ENCODE measurements at regions of chr6 and their contacts with region 1.

Region 1: GRCh38 chr6:118709859-118710350 is 58.5 kb upstream of the CEP85L start:
- DNase-seq: peak; percentile 86
- ATAC-seq: peak; percentile 93
- H3K4me3 ChIP-seq: peak overlapping the region; percentile 59 to 93 (median 83)
- H3K4me3 Mint-ChIP-seq: peak overlapping the region; percentile 97
- H3K27ac ChIP-seq: peak overlapping the region; percentile 62 to 86
- H3K27ac Mint-ChIP-seq: peak overlapping the region; percentile 95
- H3K4me1 ChIP-seq: peaks cover 54 to 58% of the 10 kb centered on the region in 2 donors
- H3K4me1 Mint-ChIP-seq: peaks cover 68% of the 10 kb centered on the region
- H3K27me3 ChIP-seq: no peaks in the 10 kb centered on the region
- H3K27me3 Mint-ChIP-seq: no peaks in the 10 kb centered on the region
- CTCF ChIP-seq: no peak

Region 2: GRCh38 chr6:118697554-118697953 is 12.4 kb before region 1 on chr6:
- CTCF ChIA-PET with region 1: interaction called, 16 read pairs
- POLR2A ChIA-PET with region 1: interaction called, 7 read pairs
- intact Hi-C with region 1: no loop called
- DNase-seq: no peak
- ATAC-seq: peak; percentile 45
- H3K4me3 ChIP-seq: no peak overlapping the region
- H3K4me3 Mint-ChIP-seq: no peak overlapping the region
- H3K27ac ChIP-seq: no peak overlapping the region
- H3K27ac Mint-ChIP-seq: no peak overlapping the region
- H3K4me1 ChIP-seq: peaks cover 4 to 7% of the 10 kb centered on the region in 2 donors
- H3K4me1 Mint-ChIP-seq: peaks cover 57% of the 10 kb centered on the region
- H3K27me3 ChIP-seq: no peaks in the 10 kb centered on the region
- H3K27me3 Mint-ChIP-seq: no peaks in the 10 kb centered on the region
- CTCF ChIP-seq: peak; percentile 23

Region 3: GRCh38 chr6:118724211-118724610 is 14.3 kb after region 1 on chr6:
- CTCF ChIA-PET with region 1: interaction called, 6 read pairs
- POLR2A ChIA-PET with region 1: interaction called, 17 read pairs
- intact Hi-C with region 1: loop called (anchors 1 kb)
- DNase-seq: peak; percentile 52
- ATAC-seq: peak; percentile 70
- H3K4me3 ChIP-seq: peak overlapping the region in 2 of 5 experiments; percentile 32 to 62
- H3K4me3 Mint-ChIP-seq: peak overlapping the region; percentile 53
- H3K27ac ChIP-seq: peak overlapping the region in 1 of 2 donors; percentile 61
- H3K27ac Mint-ChIP-seq: peak overlapping the region; percentile 13
- H3K4me1 ChIP-seq: peaks cover 42 to 43% of the 10 kb centered on the region in 2 donors
- H3K4me1 Mint-ChIP-seq: peaks cover 57% of the 10 kb centered on the region
- H3K27me3 ChIP-seq: no peaks in the 10 kb centered on the region
- H3K27me3 Mint-ChIP-seq: no peaks in the 10 kb centered on the region
- CTCF ChIP-seq: no peak

Region 4: DNA sequence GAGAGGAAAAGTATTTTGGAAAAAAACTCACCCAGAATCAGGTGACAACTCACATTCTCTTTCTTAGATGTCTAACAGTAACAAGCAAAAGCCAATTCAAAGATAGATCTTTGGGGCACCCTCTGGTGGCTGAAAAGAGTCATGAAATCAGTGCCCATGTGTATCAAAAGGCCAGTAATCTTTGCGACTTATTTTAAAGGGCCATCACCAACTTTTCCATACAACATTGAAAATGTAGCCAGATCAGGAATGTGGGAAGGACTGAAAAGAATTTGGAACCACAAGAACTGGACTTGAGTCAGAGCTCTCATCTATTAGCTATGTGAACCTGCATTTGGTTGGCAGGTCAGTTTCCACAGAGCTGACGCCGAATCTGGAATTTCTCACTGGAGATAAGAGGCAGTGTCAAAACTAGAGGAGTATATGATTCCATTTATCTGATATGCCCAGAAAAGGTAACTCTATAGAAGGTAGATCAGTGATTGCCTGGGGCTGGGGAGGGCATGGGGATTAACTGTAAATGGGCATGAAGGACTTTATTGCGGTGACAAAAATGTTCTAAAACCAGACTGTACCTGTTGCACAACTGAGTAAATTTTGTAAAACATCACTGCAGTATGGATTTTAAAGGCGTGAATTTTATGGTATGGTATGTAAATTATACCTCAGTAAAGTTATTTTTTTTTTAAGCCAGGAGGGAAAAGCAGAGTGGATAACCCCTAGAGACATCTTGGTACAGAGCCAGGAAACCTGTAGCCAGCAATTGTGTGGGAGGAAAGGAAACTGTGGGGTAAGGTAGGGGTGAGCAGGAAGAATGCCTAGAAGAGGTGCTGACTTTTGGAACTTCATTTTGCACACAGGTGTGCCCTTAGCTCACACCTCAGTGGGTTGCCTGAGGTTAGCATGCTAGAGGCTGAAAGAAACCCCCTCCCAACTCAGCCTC is 67.0 kb after region 1 on chr6:
- CTCF ChIA-PET with region 1: interaction called, 16 read pairs
- POLR2A ChIA-PET with region 1: no interaction called
- intact Hi-C with region 1: no loop called
- DNase-seq: peak; percentile 75
- ATAC-seq: peak; percentile 68
- H3K4me3 ChIP-seq: no peak overlapping the region
- H3K4me3 Mint-ChIP-seq: no peak overlapping the region
- H3K27ac ChIP-seq: no peak overlapping the region
- H3K27ac Mint-ChIP-seq: no peak overlapping the region
- H3K4me1 ChIP-seq: no peaks in the 10 kb centered on the region
- H3K4me1 Mint-ChIP-seq: peaks cover 6% of the 10 kb centered on the region
- H3K27me3 ChIP-seq: no peaks in the 10 kb centered on the region
- H3K27me3 Mint-ChIP-seq: peaks cover 4% of the 10 kb centered on the region
- CTCF ChIP-seq: peak; percentile 89

Region 5: GRCh38 chr6:118934461-118935330 is 224.8 kb after region 1 on chr6 and contains the start of gene MCM9:
- CTCF ChIA-PET with region 1: no interaction called
- POLR2A ChIA-PET with region 1: interaction called, 7 read pairs
- intact Hi-C with region 1: loop called (anchors 2 kb)
- DNase-seq: peak; percentile 93
- ATAC-seq: peak; percentile 89
- H3K4me3 ChIP-seq: peak within 1 kb of the TSS; percentile 91 to 99 (median 94)
- H3K4me3 Mint-ChIP-seq: peak within 1 kb of the TSS; percentile 92
- H3K27ac ChIP-seq: peak within 1 kb of the TSS; percentile 83 to 90
- H3K27ac Mint-ChIP-seq: peak within 1 kb of the TSS; percentile 92
- H3K4me1 ChIP-seq: peaks cover 10 to 18% of the 10 kb centered on the region in 2 donors
- H3K4me1 Mint-ChIP-seq: peaks cover 35% of the 10 kb centered on the region
- H3K27me3 ChIP-seq: no peaks in the 10 kb centered on the region
- H3K27me3 Mint-ChIP-seq: no peaks in the 10 kb centered on the region
- CTCF ChIP-seq: no peak
- total RNA-seq, gene MCM9: 51.0 and 54.5 TPM in 2 replicates

Measured in B cell (primary cell).